Caco-2 (cell line): ENCODE measurements at regions of chr3 and their contacts with region 1.

Region 1: DNA sequence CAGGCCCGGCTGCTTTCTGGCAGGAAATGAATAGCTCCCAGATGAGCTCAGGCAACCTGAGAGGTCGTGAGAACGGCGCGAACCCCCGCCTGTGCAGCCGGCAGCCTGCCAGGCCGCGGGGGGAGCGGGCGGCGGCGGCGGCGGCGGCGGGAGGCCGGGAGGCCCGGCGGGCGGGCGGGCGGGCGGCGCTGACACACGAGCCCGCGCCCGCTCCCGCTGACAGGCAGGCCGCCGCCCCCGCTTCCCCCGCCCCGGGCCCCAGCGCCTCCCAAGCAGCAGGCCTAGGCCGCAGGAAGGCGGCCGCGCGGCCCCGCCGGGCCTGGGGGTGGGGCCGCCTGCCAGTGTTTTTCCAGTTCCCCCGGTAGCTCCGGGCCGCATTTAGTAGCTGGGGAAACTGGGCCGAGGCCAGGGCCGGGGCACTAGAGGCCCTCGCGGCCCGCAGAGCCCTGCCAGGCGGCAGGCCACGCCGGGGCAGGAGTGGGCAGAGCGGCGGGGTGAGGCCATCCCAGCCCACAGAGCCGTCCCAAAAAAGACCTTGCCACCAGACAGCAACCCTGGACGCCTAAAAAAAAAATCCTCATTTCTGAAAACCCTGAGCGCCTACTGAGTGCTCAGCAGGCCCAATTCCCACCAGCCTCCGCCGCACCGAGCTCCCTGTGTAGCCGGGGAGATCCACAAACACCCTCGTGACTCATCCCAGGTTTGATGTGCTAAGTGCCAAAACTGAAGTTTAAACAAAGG is 5.6 kb downstream of the HES1 start:
- DNase-seq: peak; percentile 90 to 91
- H3K4me3 ChIP-seq: peak overlapping the region; percentile 63
- H3K4me3 Mint-ChIP-seq: peak overlapping the region; percentile 88
- H3K27ac Mint-ChIP-seq: peak overlapping the region; percentile 78
- H3K4me1 ChIP-seq: peaks cover 30% of the 10 kb centered on the region
- H3K4me1 Mint-ChIP-seq: peaks cover 13% of the 10 kb centered on the region
- H3K27me3 ChIP-seq: no peaks in the 10 kb centered on the region
- H3K27me3 Mint-ChIP-seq: no peaks in the 10 kb centered on the region
- CTCF ChIP-seq: peak in 1 of 2 experiments; percentile 4

Region 2: DNA sequence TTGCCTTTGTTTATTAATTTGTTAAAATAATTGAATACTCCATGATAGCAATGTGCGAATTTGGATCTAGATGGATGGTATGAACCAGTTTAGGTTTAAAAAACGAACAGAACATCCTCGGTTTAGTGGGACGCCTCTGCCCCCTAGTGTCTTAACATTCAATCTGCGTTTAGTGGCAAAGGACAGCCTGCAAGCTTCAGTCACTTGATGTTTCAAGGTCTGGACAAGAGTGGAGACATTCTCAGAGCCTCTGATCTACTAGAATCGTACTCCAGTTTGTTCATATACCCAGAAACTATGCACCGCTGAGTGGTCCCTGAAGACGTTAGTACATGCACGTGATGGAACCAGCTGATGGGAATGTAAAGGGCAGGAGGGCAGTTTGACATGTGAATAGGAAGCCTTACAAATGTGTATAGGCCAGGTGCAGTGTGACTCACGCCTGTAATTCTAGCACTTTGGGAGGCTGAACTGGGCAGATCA is 569.1 kb before region 1 on chr3:
- CTCF ChIA-PET with region 1: no interaction called
- POLR2A ChIA-PET with region 1: no interaction called
- intact Hi-C with region 1: no loop called
- DNase-seq: peak; percentile 68 to 78
- H3K4me3 ChIP-seq: no peak overlapping the region
- H3K4me3 Mint-ChIP-seq: no peak overlapping the region
- H3K27ac Mint-ChIP-seq: no peak overlapping the region
- H3K4me1 ChIP-seq: no peaks in the 10 kb centered on the region
- H3K4me1 Mint-ChIP-seq: no peaks in the 10 kb centered on the region
- H3K27me3 ChIP-seq: no peaks in the 10 kb centered on the region
- H3K27me3 Mint-ChIP-seq: peaks cover 5% of the 10 kb centered on the region
- CTCF ChIP-seq: peak; percentile 77 to 82

Region 3: GRCh38 chr3:193788189-193788991 is 353.2 kb before region 1 on chr3:
- CTCF ChIA-PET with region 1: interaction called, 10 read pairs
- POLR2A ChIA-PET with region 1: no interaction called
- intact Hi-C with region 1: no loop called
- DNase-seq: peak; percentile 57 to 72
- H3K4me3 ChIP-seq: no peak overlapping the region
- H3K4me3 Mint-ChIP-seq: no peak overlapping the region
- H3K27ac Mint-ChIP-seq: peak overlapping the region; percentile 61
- H3K4me1 ChIP-seq: peaks cover 59% of the 10 kb centered on the region
- H3K4me1 Mint-ChIP-seq: peaks cover 55% of the 10 kb centered on the region
- H3K27me3 ChIP-seq: no peaks in the 10 kb centered on the region
- H3K27me3 Mint-ChIP-seq: no peaks in the 10 kb centered on the region
- CTCF ChIP-seq: peak; percentile 58 to 59

Region 4: DNA sequence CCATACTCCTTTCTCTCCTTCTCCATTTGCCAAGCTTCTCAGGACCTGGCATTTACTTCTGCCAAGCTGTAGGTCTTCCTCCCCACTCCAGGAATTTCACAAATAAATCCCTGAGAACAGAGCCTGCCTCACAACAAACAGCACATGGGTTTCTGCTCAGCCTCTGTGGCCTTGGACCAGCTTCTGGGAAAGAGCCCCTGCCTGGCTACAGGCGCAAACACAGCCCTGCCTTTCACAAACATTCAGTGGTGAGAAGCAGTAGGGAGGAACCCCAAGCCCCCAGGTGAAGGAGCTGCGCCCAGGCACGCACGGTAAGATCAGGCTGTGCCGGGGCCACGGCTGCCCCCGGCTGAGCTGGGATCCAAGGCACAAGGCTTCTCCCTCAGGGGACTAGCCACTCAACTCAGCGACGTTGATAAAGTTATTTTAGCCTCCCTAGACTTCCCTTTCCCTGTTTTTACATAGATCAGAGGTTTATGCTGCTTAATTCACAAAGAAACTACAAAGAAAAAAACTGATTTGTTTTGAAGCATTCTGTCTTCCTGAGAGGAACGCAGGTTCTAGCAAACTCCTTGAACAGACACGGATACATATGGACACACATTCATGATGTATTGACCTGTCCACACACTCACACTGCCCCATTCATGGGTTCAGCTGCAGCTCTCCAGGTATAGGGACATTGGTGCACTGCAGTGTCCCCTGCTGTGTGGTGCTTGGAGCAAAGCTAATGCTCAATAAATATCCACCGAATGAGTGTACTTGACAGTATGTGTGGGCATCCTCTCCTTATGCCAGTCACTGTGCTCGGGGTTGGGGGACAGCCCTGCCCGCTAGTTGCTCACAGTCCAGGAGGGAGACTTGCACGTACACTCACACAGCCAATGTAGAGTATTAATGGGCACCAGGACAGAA is 19.8 kb after region 1 on chr3:
- CTCF ChIA-PET with region 1: no interaction called
- POLR2A ChIA-PET with region 1: no interaction called
- intact Hi-C with region 1: loop called (anchors 2 kb)
- DNase-seq: peak; percentile 44 to 63
- H3K4me3 ChIP-seq: no peak overlapping the region
- H3K4me3 Mint-ChIP-seq: peak overlapping the region; percentile 29
- H3K27ac Mint-ChIP-seq: peak overlapping the region; percentile 79
- H3K4me1 ChIP-seq: peaks cover 27% of the 10 kb centered on the region
- H3K4me1 Mint-ChIP-seq: peaks cover 29% of the 10 kb centered on the region
- H3K27me3 ChIP-seq: no peaks in the 10 kb centered on the region
- H3K27me3 Mint-ChIP-seq: no peaks in the 10 kb centered on the region
- CTCF ChIP-seq: no peak

Region 5: GRCh38 chr3:194184265-194184751 is 42.7 kb after region 1 on chr3:
- CTCF ChIA-PET with region 1: no interaction called
- POLR2A ChIA-PET with region 1: no interaction called
- intact Hi-C with region 1: no loop called
- DNase-seq: no peak
- H3K4me3 ChIP-seq: no peak overlapping the region
- H3K4me3 Mint-ChIP-seq: no peak overlapping the region
- H3K27ac Mint-ChIP-seq: no peak overlapping the region
- H3K4me1 ChIP-seq: no peaks in the 10 kb centered on the region
- H3K4me1 Mint-ChIP-seq: peaks cover 13% of the 10 kb centered on the region
- H3K27me3 ChIP-seq: no peaks in the 10 kb centered on the region
- H3K27me3 Mint-ChIP-seq: no peaks in the 10 kb centered on the region
- CTCF ChIP-seq: no peak

Region 6: DNA sequence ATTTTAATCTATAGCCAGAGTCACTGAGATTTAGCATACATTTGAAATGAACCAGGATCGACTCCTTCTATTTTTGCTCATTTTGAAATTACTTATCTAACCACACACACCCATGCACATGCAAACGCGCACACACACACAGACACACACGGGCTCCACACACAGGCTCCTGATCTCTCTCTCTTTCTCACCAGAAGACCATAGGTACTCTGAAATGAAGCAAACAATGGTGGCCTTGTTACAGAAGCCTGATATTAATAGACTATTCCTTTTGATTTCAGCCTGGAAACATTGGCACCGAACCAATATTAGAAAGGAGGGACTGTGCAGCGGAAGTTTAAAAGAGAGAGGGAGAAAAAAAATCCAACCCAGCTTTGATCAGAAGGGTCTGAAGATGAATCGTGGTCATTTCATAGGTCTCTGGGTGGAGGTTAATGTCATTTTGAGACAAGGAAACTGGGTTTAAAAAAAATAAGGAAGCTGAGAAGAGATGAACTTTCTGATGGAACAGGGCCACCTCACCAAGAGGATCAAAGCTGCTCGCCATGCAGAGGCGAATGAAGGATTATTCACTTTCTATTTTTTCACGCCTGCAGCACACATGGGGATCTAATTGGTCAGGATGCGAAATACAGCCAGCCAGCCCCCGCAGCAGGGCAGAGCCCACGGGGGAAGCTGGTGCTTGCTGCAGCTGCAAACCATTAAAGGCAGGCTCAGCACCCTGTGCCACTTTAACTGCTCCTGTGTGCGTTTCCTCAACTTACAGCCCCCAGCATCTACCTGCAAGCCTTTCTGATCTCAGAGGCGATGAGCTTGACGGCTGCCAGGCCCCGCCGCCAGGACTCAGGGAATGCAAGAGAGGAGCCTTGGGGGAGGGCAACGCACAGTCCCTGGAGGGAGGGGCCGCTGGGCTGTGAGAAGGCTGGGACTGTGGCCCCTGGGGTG is 83.2 kb after region 1 on chr3:
- CTCF ChIA-PET with region 1: interaction called, 11 read pairs
- POLR2A ChIA-PET with region 1: interaction called, 3 read pairs
- intact Hi-C with region 1: no loop called
- DNase-seq: no peak
- H3K4me3 ChIP-seq: no peak overlapping the region
- H3K4me3 Mint-ChIP-seq: no peak overlapping the region
- H3K27ac Mint-ChIP-seq: no peak overlapping the region
- H3K4me1 ChIP-seq: no peaks in the 10 kb centered on the region
- H3K4me1 Mint-ChIP-seq: peaks cover 4% of the 10 kb centered on the region
- H3K27me3 ChIP-seq: no peaks in the 10 kb centered on the region
- H3K27me3 Mint-ChIP-seq: no peaks in the 10 kb centered on the region
- CTCF ChIP-seq: no peak

Region 7: DNA sequence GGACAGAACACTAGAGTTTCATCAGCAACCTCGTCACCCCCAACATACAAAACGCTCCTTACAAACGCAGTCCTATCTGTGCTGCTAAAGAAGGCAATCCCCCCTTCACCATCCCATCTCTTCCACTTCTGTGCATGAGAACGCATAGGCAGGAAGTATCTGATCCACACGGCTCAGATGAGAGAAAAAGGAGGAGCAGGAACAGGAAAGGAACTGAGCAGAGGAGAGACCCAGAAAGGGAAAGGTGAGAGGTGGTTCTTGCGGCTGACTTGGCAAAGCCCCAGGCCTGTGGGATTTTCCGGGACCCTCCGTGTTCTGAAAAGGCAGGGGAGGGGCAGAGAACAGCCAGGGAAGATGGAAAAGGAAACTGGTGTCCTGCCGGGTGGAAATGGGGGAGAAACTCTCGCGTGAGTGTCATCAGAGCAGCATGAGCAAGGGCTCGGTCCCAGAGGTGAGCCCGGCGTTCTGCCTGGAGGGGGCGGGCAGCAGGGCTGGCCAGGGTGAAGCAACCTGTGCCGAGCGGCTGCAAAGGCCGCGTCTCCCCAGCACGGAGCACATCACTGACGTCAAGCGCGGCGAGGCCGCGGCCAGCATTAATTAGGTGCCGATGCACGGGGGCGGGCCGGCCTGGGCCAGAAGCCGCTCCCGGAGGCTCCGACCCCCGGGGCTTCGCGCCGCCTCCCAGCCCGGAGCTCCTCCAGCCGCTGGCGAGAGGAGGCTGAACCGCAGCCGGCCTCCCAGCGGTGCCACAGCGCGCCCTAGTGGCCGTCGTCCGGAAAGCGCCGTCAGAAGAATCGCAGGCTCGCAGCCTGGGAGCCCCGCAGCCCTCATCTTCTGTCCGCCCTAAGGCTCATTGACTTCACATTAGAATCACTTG is 173.7 kb after region 1 on chr3:
- CTCF ChIA-PET with region 1: interaction called, 47 read pairs
- POLR2A ChIA-PET with region 1: interaction called, 7 read pairs
- intact Hi-C with region 1: loop called (anchors 1 kb)
- DNase-seq: peak; percentile 92 to 95
- H3K4me3 ChIP-seq: peak overlapping the region; percentile 51
- H3K4me3 Mint-ChIP-seq: peak overlapping the region; percentile 85
- H3K27ac Mint-ChIP-seq: peak overlapping the region; percentile 93
- H3K4me1 ChIP-seq: peaks cover 41% of the 10 kb centered on the region
- H3K4me1 Mint-ChIP-seq: peaks cover 49% of the 10 kb centered on the region
- H3K27me3 ChIP-seq: no peaks in the 10 kb centered on the region
- H3K27me3 Mint-ChIP-seq: no peaks in the 10 kb centered on the region
- CTCF ChIP-seq: peak; percentile 87 to 95